Heart right ventricle (tissue), 16 donors: ENCODE measurements at regions of chr4 and their contacts with region 1.

Region 1: GRCh38 chr4:154506253-154506652 is 14.7 kb upstream of the DCHS2 start:
- DNase-seq: no peak
- ATAC-seq: peak in 1 of 8 donors; percentile 55
- H3K4me3 ChIP-seq: no peak overlapping the region
- H3K27ac ChIP-seq: no peak overlapping the region
- H3K4me1 ChIP-seq: no peaks in the 10 kb centered on the region
- H3K27me3 ChIP-seq: peaks cover 0 to 40% (median 18%) of the 10 kb centered on the region in 7 donors
- CTCF ChIP-seq: peak in 7 of 9 donors; percentile 25 to 59 (median 51)

Region 2: DNA sequence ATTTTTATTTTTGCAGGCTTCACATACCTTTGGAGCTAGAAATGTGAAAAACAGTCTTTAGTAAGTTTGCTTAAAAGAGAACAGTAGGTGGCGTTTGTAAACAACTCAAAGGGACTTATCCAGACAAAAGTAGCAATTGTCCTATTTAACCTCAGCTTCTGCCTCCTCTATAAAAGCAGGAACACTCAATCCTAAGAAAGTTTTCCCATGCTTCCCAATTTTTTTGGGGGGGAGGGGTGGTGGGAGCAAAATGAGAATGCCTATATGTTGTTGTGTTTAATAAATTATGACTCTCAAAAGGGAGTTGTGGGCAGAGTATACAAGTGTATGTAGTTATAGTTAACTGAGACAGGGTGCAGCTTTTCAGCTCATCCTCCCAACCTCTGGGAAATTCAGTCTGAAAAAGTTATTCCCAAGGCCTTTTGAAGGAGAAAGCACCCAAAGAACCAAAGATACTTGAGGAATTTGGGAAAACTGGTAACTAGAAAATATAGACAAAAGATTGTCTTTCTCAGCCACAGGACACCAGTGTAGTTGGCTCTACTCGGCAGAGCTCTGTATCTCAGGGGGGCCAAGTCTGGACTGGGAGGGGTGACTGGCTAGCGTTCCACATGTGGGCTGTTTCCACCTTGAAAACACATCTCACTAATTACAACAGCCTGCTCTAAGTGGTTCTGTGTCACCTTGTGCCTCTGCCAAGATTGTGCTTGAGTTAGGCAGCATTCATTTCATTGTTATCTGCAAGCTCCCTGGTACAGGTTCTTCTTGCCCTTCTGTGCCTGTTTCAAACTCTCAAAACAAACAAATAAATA is 720.1 kb before region 1 on chr4:
- intact Hi-C with region 1: loop called in 3 of 10 experiments (anchors 10 kb)
- DNase-seq: no peak
- ATAC-seq: no peak
- H3K4me3 ChIP-seq: no peak overlapping the region
- H3K27ac ChIP-seq: no peak overlapping the region
- H3K4me1 ChIP-seq: peaks cover 2 to 25% (median 18%) of the 10 kb centered on the region in 9 donors
- H3K27me3 ChIP-seq: peaks cover 24 to 100% (median 85%) of the 10 kb centered on the region in 7 donors
- CTCF ChIP-seq: peak in 7 of 9 donors; percentile 23 to 51 (median 40)

Region 3: DNA sequence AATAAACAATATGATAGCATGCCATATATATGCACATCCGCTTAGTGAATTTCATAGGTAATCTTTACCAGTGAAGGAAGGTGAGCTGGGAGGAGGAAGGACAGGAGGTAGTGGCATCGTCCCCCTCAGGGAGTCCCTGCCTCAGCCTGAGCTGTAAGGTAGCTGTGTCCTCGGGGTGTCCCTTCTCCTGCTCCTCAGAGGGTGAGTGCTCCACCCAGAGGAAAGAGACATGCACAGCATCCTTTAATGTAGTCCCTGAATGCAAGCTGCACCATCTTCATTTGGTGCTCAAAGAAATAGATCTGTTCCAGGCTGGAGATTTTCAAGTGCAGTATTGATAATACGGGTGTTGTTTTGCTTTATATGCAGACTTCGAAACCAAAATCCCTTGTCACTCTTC is 386.9 kb before region 1 on chr4:
- intact Hi-C with region 1: no loop called
- DNase-seq: no peak
- ATAC-seq: no peak
- H3K4me3 ChIP-seq: no peak overlapping the region
- H3K27ac ChIP-seq: no peak overlapping the region
- H3K4me1 ChIP-seq: no peaks in the 10 kb centered on the region
- H3K27me3 ChIP-seq: no peaks in the 10 kb centered on the region
- CTCF ChIP-seq: no peak

Region 4: DNA sequence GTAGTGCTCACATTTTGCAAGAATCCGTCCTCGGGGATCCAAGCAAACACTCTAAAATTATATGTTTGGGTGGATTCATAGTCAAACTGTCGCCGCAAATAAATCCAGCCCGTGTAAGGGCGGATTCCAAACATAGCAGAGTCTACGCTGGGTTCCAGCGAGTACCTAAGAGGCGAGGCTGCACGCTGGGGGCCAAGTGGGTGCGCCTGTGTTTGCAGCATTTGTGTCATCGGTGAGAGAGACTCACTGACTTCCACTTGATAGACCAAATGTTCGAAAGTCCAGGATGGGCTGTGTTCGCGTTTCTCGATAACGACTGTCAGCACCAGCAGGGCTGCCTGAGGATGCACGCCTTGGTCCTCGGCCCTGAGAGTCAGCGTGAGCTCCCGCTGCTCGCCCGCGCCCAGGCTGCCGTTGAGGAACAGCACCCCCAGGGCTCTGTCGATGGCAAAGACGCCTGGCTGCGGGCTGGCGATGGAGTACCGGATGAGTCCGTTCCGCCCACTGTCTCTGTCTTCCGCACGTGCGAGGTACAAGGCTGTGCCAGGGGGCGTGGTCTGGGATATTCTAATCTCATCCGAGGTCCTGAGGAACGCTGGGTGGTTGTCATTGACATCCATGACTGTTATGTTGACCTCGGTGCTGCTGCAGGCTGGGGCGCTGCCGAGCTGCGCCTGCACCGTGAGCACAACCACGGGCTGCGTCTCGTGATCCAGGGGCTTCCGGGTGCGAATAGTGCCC is 173.4 kb before region 1 on chr4:
- intact Hi-C with region 1: loop called in 4 of 10 experiments (anchors 2 to 10 kb)
- DNase-seq: peak; percentile 5 to 11
- ATAC-seq: peak in 7 of 8 donors; percentile 20 to 64 (median 47)
- H3K4me3 ChIP-seq: peak overlapping the region in 7 of 10 donors; percentile 1 to 36 (median 29)
- H3K27ac ChIP-seq: no peak overlapping the region
- H3K4me1 ChIP-seq: peaks cover 0 to 10% (median 6%) of the 10 kb centered on the region in 9 donors
- H3K27me3 ChIP-seq: peaks cover 0 to 46% (median 36%) of the 10 kb centered on the region in 7 donors
- CTCF ChIP-seq: peak in 1 of 9 donors; percentile 16

Region 5: DNA sequence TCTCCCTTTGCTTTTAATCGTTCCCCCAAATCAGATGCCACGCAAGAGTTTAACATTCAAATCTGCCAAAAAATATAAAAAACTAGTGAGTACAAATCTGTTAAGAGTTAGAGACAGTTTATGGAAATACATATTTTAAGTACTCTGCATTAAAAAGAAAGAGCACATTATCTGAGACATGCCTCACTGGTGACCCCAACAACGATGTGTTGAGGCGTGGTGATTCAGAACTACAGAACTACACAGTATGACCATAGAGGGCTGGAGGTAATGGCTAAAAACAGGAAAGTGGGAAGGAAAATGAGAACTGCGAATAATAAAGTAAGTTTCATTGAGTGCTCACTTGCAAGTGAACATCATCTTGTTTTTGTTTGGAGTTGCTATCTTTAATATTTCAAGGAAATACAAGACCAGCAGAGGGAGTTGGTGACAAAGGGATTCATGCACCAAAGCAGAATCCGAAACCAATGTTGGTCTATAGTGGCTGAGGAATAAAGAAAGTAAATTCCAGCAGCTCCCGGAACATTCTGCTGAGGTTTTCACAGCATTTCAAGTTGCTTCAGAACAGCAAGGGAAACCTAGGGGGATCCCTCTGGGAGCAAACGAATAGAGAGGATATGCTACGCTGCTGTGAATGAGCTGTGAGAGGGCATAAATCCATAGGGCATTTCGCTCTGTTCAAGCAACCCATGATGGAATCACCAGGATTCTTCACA is 106.8 kb before region 1 on chr4:
- intact Hi-C with region 1: loop called in 6 of 10 experiments (anchors 5 to 10 kb)
- DNase-seq: no peak
- ATAC-seq: peak in 2 of 8 donors; percentile 33 to 34
- H3K4me3 ChIP-seq: peak overlapping the region in 3 of 10 donors; percentile 18 to 26 (median 24)
- H3K27ac ChIP-seq: no peak overlapping the region
- H3K4me1 ChIP-seq: no peaks in the 10 kb centered on the region
- H3K27me3 ChIP-seq: peaks cover 0 to 8% (median 0%) of the 10 kb centered on the region in 7 donors
- CTCF ChIP-seq: peak in 7 of 9 donors; percentile 18 to 53 (median 45)

Region 6: GRCh38 chr4:154406018-154406795 is 100.0 kb before region 1 on chr4:
- intact Hi-C with region 1: loop called in 3 of 10 experiments (anchors 5 to 10 kb)
- DNase-seq: no peak
- ATAC-seq: no peak
- H3K4me3 ChIP-seq: no peak overlapping the region
- H3K27ac ChIP-seq: no peak overlapping the region
- H3K4me1 ChIP-seq: no peaks in the 10 kb centered on the region
- H3K27me3 ChIP-seq: peaks cover 0 to 8% (median 0%) of the 10 kb centered on the region in 7 donors
- CTCF ChIP-seq: no peak